A549 (cell line): ENCODE measurements at regions of chr15 and their contacts with region 1.

Region 1: DNA sequence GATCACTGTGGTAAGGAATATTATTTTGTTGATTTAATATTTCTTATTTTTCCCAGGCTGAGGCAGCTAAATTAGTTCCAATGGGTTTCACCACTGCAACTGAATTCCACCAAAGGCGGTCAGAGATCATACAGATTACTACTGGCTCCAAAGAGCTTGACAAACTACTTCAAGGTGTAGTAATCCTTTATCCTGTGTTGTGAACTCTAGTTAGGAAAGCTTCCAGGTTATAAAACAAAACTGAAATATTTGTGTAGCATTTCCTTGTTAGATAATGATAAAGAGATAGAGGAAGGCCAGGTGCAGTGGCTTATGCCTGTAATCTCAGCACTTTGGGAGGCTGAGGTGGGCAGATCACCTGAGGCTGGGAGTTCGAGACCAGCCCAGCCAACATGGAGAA is 11.1 kb downstream of the RAD51 start:
- DNase-seq: no peak
- ATAC-seq: no peak
- H3K4me3 ChIP-seq: no peak overlapping the region
- H3K27ac ChIP-seq: no peak overlapping the region
- H3K4me1 ChIP-seq: no peaks in the 10 kb centered on the region
- CTCF ChIP-seq: no peak
- EP300 ChIP-seq: no peak
- POLR2A ChIP-seq: no peak
- RAD21 ChIP-seq: no peak

Region 2: GRCh38 chr15:40722934-40723333 is 16.8 kb after region 1 on chr15:
- CTCF ChIA-PET with region 1: no interaction called
- POLR2A ChIA-PET with region 1: no interaction called
- DNase-seq: no peak
- ATAC-seq: no peak
- H3K4me3 ChIP-seq: no peak overlapping the region
- H3K27ac ChIP-seq: no peak overlapping the region
- H3K4me1 ChIP-seq: no peaks in the 10 kb centered on the region
- CTCF ChIP-seq: no peak
- EP300 ChIP-seq: no peak
- POLR2A ChIP-seq: no peak
- RAD21 ChIP-seq: no peak

Region 3: DNA sequence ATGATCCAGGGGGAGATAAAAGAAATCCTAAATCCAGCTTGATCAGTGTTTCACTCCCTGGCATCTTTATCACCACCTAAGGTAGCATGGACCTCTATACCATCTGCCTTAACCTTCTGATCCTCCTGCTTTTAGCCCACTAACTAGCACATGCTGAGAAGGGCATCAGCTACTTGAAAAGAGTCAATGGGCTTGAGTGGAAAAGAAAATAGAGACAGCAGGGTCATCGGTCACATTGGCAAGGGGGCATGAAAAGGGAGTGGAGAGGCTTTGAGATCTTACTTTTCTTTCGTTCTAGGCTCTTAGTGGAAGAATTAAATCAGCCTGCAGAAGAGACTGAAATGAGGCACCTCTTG is 100.5 kb after region 1 on chr15:
- CTCF ChIA-PET with region 1: no interaction called
- POLR2A ChIA-PET with region 1: interaction called, 13 read pairs
- DNase-seq: no peak
- ATAC-seq: peak in 1 of 2 experiments; percentile 1; a peak in 2 of 6 replicates
- H3K4me3 ChIP-seq: peak overlapping the region; percentile 83
- H3K27ac ChIP-seq: peak overlapping the region; percentile 96 to 99
- H3K4me1 ChIP-seq: peaks cover 11% of the 10 kb centered on the region; the same call in 1 of the 3 replicates
- CTCF ChIP-seq: no peak
- EP300 ChIP-seq: no peak
- POLR2A ChIP-seq: no peak
- RAD21 ChIP-seq: no peak